CD8-positive, alpha-beta T cell (primary cell): ENCODE measurements at regions of chr6 and their contacts with region 1.

Region 1: GRCh38 chr6:6975459-6976111 is 132.2 kb upstream of the RREB1 start:
- DNase-seq: no peak
- ATAC-seq: no peak
- H3K4me3 ChIP-seq: no peak overlapping the region
- H3K4me3 Mint-ChIP-seq: no peak overlapping the region
- H3K27ac ChIP-seq: no peak overlapping the region
- H3K27ac Mint-ChIP-seq: no peak overlapping the region
- H3K4me1 ChIP-seq: no peaks in the 10 kb centered on the region
- H3K4me1 Mint-ChIP-seq: no peaks in the 10 kb centered on the region
- H3K27me3 ChIP-seq: no peaks in the 10 kb centered on the region
- H3K27me3 Mint-ChIP-seq: no peaks in the 10 kb centered on the region
- CTCF ChIP-seq: no peak

Region 2: DNA sequence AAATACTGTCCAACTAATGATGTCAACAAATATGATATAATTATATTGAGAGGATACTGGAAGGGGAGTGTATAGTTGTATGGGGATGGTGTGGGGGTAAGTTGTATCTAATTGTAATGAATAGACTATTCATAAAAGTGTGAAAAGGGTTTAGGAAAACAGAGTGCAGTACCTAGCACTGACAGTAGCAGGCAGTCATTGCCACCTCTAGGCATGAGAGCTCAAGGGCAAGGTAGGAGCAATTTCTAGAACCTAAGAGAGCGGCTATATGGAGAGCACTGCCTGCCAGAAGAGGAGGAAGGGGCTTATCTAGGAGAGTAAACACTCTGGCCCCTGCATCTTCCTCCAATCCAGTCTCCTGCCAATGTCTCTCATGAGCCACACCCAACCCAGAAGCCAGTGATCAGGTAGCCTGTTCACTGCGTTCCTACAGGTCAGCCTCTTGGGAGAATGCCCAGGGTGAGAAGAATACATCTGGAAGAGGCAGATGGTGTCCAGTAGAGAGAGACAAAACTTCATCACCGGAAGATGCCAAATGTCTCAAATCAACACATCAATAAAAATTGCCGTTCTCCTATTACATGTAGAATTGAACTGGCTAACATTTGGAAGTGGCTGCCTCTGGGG is 187.1 kb before region 1 on chr6:
- CTCF ChIA-PET with region 1: no interaction called
- POLR2A ChIA-PET with region 1: no interaction called
- intact Hi-C with region 1: loop called in 1 of 2 experiments (anchors 5 kb)
- DNase-seq: peak in 3 of 9 experiments; percentile 10 to 42 (median 27)
- ATAC-seq: peak; percentile 79
- H3K4me3 ChIP-seq: no peak overlapping the region
- H3K4me3 Mint-ChIP-seq: no peak overlapping the region
- H3K27ac ChIP-seq: no peak overlapping the region
- H3K27ac Mint-ChIP-seq: no peak overlapping the region
- H3K4me1 ChIP-seq: no peaks in the 10 kb centered on the region
- H3K4me1 Mint-ChIP-seq: no peaks in the 10 kb centered on the region
- H3K27me3 ChIP-seq: no peaks in the 10 kb centered on the region
- H3K27me3 Mint-ChIP-seq: no peaks in the 10 kb centered on the region
- CTCF ChIP-seq: peak; percentile 35

Region 3: GRCh38 chr6:6960571-6961251 is 14.9 kb before region 1 on chr6:
- CTCF ChIA-PET with region 1: no interaction called
- POLR2A ChIA-PET with region 1: no interaction called
- intact Hi-C with region 1: no loop called
- DNase-seq: no peak
- ATAC-seq: no peak
- H3K4me3 ChIP-seq: no peak overlapping the region
- H3K4me3 Mint-ChIP-seq: no peak overlapping the region
- H3K27ac ChIP-seq: no peak overlapping the region
- H3K27ac Mint-ChIP-seq: no peak overlapping the region
- H3K4me1 ChIP-seq: no peaks in the 10 kb centered on the region
- H3K4me1 Mint-ChIP-seq: no peaks in the 10 kb centered on the region
- H3K27me3 ChIP-seq: no peaks in the 10 kb centered on the region
- H3K27me3 Mint-ChIP-seq: no peaks in the 10 kb centered on the region
- CTCF ChIP-seq: no peak

Region 4: GRCh38 chr6:7021301-7021700 is 45.7 kb after region 1 on chr6:
- CTCF ChIA-PET with region 1: no interaction called
- POLR2A ChIA-PET with region 1: no interaction called
- intact Hi-C with region 1: no loop called
- DNase-seq: no peak
- ATAC-seq: no peak
- H3K4me3 ChIP-seq: no peak overlapping the region
- H3K4me3 Mint-ChIP-seq: no peak overlapping the region
- H3K27ac ChIP-seq: no peak overlapping the region
- H3K27ac Mint-ChIP-seq: no peak overlapping the region
- H3K4me1 ChIP-seq: no peaks in the 10 kb centered on the region
- H3K4me1 Mint-ChIP-seq: no peaks in the 10 kb centered on the region
- H3K27me3 ChIP-seq: no peaks in the 10 kb centered on the region
- H3K27me3 Mint-ChIP-seq: peaks cover 2% of the 10 kb centered on the region
- CTCF ChIP-seq: no peak